WTC11 (cell line): ENCODE measurements at regions of chr19 and their contacts with region 1.

Region 1: GRCh38 chr19:53942001-53942786 is 20.5 kb upstream of the CACNG8 start:
- DNase-seq: peak; percentile 100
- ATAC-seq: peak; percentile 92
- H3K4me3 Mint-ChIP-seq: peak overlapping the region; percentile 95
- H3K27ac Mint-ChIP-seq: 0 out of 2 replicates have a peak overlapping the region, but pooled peaks have one; percentile 83
- H3K4me1 Mint-ChIP-seq: peaks cover 32% of the 10 kb centered on the region
- H3K27me3 Mint-ChIP-seq: no peaks in the 10 kb centered on the region; the same call in 1 of the 2 replicates
- CTCF ChIP-seq: peak; percentile 88

Region 2: GRCh38 chr19:53844849-53845246 is 97.3 kb before region 1 on chr19:
- CTCF ChIA-PET with region 1: interaction called, 15 read pairs
- POLR2A ChIA-PET with region 1: interaction called, 3 read pairs
- DNase-seq: no peak
- ATAC-seq: no peak
- H3K4me3 Mint-ChIP-seq: no peak overlapping the region
- H3K27ac Mint-ChIP-seq: no peak overlapping the region
- H3K4me1 Mint-ChIP-seq: peaks cover 8% of the 10 kb centered on the region
- H3K27me3 Mint-ChIP-seq: peaks cover 9% of the 10 kb centered on the region; the same call in 1 of the 2 replicates
- CTCF ChIP-seq: no peak

Region 3: DNA sequence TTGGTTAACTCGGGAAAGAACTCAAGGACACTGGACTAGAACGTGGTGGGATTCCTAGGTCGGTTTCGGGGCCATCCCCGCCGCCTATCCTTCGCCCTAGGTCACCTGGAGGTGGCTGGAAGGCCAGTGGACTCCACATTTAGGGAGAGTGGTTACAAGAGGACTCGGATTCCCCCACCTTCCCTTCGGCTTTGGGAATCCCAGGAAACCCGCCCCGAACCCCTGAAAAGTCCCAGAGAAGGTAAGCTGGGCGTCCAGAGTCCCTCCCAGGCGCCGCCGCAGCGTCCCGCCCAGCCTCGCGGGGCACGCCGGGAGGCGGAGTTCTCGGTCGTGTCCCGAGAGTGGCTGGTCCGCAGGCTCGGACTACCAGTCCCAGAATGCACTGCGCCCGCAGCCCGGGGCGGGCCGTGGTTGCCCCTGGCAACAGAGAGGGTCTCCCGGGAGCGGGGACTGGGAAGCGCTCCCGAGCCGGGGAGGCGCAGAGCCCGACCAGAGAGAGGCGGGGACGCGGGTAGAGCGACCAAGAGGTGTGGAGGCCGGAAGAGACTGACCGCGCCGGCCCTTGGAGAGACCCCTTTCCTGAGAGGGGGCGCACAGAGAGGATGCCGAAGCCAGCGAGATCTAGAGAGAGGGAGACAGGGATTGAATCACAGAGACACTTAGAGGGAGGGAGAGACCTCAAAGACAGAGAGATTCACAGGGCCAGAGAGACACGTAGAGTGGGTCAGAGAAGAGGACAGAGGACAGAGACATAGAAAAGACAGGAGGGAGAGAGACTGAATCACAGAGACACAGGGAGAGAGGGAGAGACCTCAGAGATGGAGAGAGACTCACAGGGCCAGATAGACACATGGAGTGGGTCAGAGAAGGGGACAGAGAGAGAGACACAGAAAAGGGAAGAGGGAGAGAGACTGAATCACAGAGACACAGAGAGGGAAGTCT is 62.8 kb before region 1 on chr19:
- CTCF ChIA-PET with region 1: interaction called, 14 read pairs
- POLR2A ChIA-PET with region 1: interaction called, 9 read pairs
- DNase-seq: peak; percentile 100
- ATAC-seq: peak; percentile 84
- H3K4me3 Mint-ChIP-seq: no peak overlapping the region
- H3K27ac Mint-ChIP-seq: peak overlapping the region; percentile 81
- H3K4me1 Mint-ChIP-seq: peaks cover 27% of the 10 kb centered on the region
- H3K27me3 Mint-ChIP-seq: peaks cover 11% of the 10 kb centered on the region
- CTCF ChIP-seq: no peak

Region 4: GRCh38 chr19:53898636-53899341 is 43.4 kb before region 1 on chr19:
- CTCF ChIA-PET with region 1: interaction called, 39 read pairs
- POLR2A ChIA-PET with region 1: interaction called, 3 read pairs
- DNase-seq: peak; percentile 100
- ATAC-seq: peak; percentile 92
- H3K4me3 Mint-ChIP-seq: peak overlapping the region; percentile 81
- H3K27ac Mint-ChIP-seq: peak overlapping the region; percentile 100
- H3K4me1 Mint-ChIP-seq: peaks cover 33% of the 10 kb centered on the region
- H3K27me3 Mint-ChIP-seq: 0 out of 2 replicates have a peak, but pooled peaks cover 9% of the 10 kb centered on the region
- CTCF ChIP-seq: no peak

Region 5: GRCh38 chr19:53927739-53928138 is 14.5 kb before region 1 on chr19:
- CTCF ChIA-PET with region 1: interaction called, 17 read pairs
- POLR2A ChIA-PET with region 1: interaction called, 6 read pairs
- DNase-seq: peak; percentile 88
- ATAC-seq: peak; percentile 94
- H3K4me3 Mint-ChIP-seq: no peak overlapping the region
- H3K27ac Mint-ChIP-seq: peak overlapping the region; percentile 7
- H3K4me1 Mint-ChIP-seq: peaks cover 6% of the 10 kb centered on the region
- H3K27me3 Mint-ChIP-seq: no peaks in the 10 kb centered on the region
- CTCF ChIP-seq: no peak

Region 6: DNA sequence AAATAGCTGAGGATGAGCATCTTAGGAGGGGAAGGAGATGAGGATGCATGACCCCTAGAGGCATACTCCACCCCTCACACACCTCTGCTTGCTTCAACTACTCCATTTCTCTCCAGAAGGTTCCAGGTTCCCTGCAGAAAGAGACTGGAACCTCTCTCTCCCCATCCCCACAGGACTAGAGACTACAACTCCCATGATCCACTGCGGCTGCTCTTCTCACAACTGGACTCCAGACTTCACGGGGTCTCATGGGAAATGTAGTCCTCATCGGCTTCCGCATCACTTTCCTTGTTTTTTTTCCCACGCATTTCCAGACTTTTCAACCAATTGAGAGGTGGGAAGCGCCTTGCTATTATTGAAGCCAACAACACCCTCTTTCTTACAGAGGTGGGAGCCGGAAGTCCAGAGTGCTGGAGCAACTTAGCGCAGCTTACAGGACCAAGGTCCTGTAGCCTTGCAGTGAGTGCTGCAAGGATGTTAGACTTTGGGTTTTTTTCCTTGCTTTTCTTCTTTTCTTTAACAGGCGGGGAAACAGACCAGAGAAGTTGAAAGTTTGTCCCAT is 35.3 kb after region 1 on chr19:
- CTCF ChIA-PET with region 1: interaction called, 39 read pairs
- POLR2A ChIA-PET with region 1: interaction called, 35 read pairs
- DNase-seq: peak; percentile 82
- ATAC-seq: 0 out of 2 replicates have a peak, but pooled peaks have one; percentile 1
- H3K4me3 Mint-ChIP-seq: peak overlapping the region; percentile 93
- H3K27ac Mint-ChIP-seq: peak overlapping the region; percentile 94
- H3K4me1 Mint-ChIP-seq: peaks cover 15% of the 10 kb centered on the region
- H3K27me3 Mint-ChIP-seq: peaks cover 4% of the 10 kb centered on the region; the same call in 1 of the 2 replicates
- CTCF ChIP-seq: no peak

Region 7: GRCh38 chr19:54069470-54069869 is 127.3 kb after region 1 on chr19:
- CTCF ChIA-PET with region 1: no interaction called
- POLR2A ChIA-PET with region 1: no interaction called
- DNase-seq: no peak
- ATAC-seq: no peak
- H3K4me3 Mint-ChIP-seq: no peak overlapping the region
- H3K27ac Mint-ChIP-seq: no peak overlapping the region
- H3K4me1 Mint-ChIP-seq: no peaks in the 10 kb centered on the region
- H3K27me3 Mint-ChIP-seq: peaks cover 2% of the 10 kb centered on the region; the same call in 1 of the 2 replicates
- CTCF ChIP-seq: no peak

Region 8: DNA sequence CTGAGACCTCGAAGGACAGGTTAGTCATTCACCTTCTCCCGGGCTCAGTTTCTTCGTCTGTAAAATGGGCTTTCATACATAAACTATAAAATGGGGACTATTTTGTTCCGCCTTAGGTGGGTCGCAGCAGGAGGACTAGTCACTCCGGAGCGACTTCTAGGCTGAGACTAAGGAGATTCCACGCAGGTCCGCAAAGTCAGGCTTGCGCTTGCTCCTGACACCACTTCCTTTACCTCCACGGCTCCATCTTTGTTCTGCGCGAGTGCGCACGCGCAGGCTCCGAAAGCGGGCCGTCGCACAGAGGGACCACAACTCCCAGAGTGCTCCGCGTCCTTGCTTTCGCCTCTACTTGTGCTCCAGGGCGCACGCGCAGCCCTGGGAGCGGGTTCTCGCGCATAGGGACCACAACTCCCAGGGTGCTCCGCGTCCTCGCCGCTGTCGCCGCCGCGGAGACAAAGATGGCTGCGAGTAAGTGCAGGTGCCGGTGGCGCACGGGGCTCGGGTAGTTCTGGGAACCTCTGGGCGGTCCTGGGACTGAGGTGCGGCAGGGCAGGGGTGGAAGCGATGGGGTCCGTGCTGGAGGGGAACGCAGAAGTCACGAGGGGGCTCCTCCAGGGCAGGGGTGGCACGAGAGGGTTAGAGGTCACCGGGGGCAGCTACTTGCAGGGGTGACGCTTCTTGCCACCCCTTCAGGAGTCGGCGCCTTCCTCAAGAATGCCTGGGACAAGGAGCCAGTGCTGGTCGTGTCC is 160.4 kb after region 1 on chr19 and contains the start of gene NDUFA3:
- CTCF ChIA-PET with region 1: no interaction called
- POLR2A ChIA-PET with region 1: no interaction called
- DNase-seq: peak; percentile 98
- ATAC-seq: peak; percentile 96
- H3K4me3 Mint-ChIP-seq: peak within 1 kb of the TSS; percentile 97
- H3K27ac Mint-ChIP-seq: peak within 1 kb of the TSS; percentile 96
- H3K4me1 Mint-ChIP-seq: peaks cover 3% of the 10 kb centered on the region
- H3K27me3 Mint-ChIP-seq: no peaks in the 10 kb centered on the region; the same call in 1 of the 2 replicates
- CTCF ChIP-seq: no peak
- total RNA-seq, gene NDUFA3: 181 to 203 TPM (median 203 TPM) in 3 replicates